ENCODE measurements at regions of chr1 and their contacts with region 1.

Region 1: GRCh38 chr1:220786337-220787068 is at the start of gene MTARC1:
- DNase-seq: peak; percentile 78 to 87
- ATAC-seq: peak; percentile 88
- H3K4me3 ChIP-seq: peak within 1 kb of the TSS; percentile 46 to 82
- H3K27ac ChIP-seq: peak within 1 kb of the TSS in 1 of 2 donors; percentile 18
- H3K4me1 ChIP-seq: no peaks in the 10 kb centered on the region
- H3K27me3 ChIP-seq: no peaks in the 10 kb centered on the region
- total RNA-seq, gene MTARC1: 8.1 to 9.9 TPM

Region 2: GRCh38 chr1:219990782-219991510 is 795.6 kb before region 1 on chr1:
- intact Hi-C with region 1: loop called in 1 of 2 experiments (anchors 10 kb)
- DNase-seq: no peak
- ATAC-seq: peak; percentile 68
- H3K4me3 ChIP-seq: no peak overlapping the region
- H3K27ac ChIP-seq: no peak overlapping the region
- H3K4me1 ChIP-seq: no peaks in the 10 kb centered on the region
- H3K27me3 ChIP-seq: no peaks in the 10 kb centered on the region

Region 3: DNA sequence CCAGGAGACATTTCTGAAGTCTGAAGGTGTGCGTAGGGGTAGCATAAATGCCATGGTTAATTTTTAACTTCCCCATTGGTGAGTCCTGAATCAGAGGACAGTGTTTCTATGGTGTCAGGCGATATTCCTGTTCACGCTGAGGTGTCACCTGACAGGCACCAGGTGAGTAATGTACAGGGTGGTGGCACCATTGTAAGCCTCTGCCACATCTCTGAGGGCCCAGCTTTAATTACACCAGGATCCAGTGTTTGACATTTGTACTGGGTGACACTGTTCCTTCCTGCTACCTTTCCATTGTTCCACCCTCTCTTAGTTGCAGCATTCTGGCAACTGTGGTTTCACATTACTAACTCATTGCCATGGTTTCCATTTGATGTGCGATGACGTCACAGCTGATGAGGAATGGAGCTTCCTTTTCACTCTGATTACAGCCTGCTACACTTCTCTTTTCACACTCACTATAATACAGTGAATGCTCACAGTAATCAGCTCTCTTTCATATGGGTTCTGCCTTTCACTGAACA is 299.1 kb before region 1 on chr1:
- intact Hi-C with region 1: no loop called
- DNase-seq: no peak
- ATAC-seq: no peak
- H3K4me3 ChIP-seq: no peak overlapping the region
- H3K27ac ChIP-seq: no peak overlapping the region
- H3K4me1 ChIP-seq: peaks cover 4 to 9% of the 10 kb centered on the region in 2 donors
- H3K27me3 ChIP-seq: no peaks in the 10 kb centered on the region

Region 4: GRCh38 chr1:220733090-220733601 is 53.4 kb before region 1 on chr1:
- intact Hi-C with region 1: loop called in 1 of 2 experiments (anchors 5 kb)
- DNase-seq: peak; percentile 87 to 92
- ATAC-seq: peak; percentile 95
- H3K4me3 ChIP-seq: peak overlapping the region; percentile 2 to 28
- H3K27ac ChIP-seq: no peak overlapping the region
- H3K4me1 ChIP-seq: no peaks in the 10 kb centered on the region
- H3K27me3 ChIP-seq: no peaks in the 10 kb centered on the region

Region 5: GRCh38 chr1:220852408-220852807 is 65.9 kb after region 1 on chr1:
- intact Hi-C with region 1: no loop called
- DNase-seq: no peak
- ATAC-seq: no peak
- H3K4me3 ChIP-seq: no peak overlapping the region
- H3K27ac ChIP-seq: no peak overlapping the region
- H3K4me1 ChIP-seq: no peaks in the 10 kb centered on the region
- H3K27me3 ChIP-seq: no peaks in the 10 kb centered on the region

Region 6: DNA sequence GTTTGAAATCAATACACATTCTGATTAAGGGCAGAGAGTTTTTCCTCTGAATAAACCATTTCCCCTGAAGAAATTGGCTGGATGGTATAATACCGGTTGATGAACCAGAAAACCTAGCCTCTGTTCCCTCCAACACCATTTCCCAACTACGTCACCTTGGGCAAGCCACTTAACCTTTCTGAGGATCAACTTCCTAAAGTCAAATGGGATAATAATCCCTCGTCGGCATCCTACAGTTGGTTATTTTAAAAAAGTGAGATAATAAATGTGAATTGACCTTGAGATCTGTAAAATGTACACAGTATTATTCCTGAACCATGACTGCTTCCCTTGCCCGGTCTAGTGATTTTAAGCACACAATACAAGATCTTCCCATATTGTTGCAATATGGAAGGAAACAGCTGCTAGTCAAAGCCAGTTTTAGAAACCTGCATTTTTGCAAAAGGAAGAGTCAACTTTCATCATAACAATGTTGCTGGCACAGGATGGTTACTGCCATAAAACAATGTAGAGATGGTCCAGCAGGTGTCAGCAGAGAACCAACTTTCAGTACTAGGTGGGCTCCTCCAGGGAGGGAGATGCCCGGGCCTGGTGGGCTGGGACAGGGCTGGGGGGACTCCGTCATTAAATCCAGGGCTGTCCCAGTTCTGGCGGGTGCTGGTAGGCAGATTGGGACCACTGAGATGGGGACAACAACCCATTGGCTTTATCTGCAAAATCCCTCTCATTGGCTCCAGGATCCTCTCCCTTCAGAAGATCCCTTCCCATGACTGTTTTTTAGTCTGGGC is 87.6 kb after region 1 on chr1:
- intact Hi-C with region 1: no loop called
- DNase-seq: no peak
- ATAC-seq: peak; percentile 56
- H3K4me3 ChIP-seq: no peak overlapping the region
- H3K27ac ChIP-seq: no peak overlapping the region
- H3K4me1 ChIP-seq: no peaks in the 10 kb centered on the region
- H3K27me3 ChIP-seq: no peaks in the 10 kb centered on the region

Measured in aorta (tissue), 5 donors.